WTC11 (cell line): ENCODE measurements at regions of chr6 and their contacts with region 1.

Region 1: DNA sequence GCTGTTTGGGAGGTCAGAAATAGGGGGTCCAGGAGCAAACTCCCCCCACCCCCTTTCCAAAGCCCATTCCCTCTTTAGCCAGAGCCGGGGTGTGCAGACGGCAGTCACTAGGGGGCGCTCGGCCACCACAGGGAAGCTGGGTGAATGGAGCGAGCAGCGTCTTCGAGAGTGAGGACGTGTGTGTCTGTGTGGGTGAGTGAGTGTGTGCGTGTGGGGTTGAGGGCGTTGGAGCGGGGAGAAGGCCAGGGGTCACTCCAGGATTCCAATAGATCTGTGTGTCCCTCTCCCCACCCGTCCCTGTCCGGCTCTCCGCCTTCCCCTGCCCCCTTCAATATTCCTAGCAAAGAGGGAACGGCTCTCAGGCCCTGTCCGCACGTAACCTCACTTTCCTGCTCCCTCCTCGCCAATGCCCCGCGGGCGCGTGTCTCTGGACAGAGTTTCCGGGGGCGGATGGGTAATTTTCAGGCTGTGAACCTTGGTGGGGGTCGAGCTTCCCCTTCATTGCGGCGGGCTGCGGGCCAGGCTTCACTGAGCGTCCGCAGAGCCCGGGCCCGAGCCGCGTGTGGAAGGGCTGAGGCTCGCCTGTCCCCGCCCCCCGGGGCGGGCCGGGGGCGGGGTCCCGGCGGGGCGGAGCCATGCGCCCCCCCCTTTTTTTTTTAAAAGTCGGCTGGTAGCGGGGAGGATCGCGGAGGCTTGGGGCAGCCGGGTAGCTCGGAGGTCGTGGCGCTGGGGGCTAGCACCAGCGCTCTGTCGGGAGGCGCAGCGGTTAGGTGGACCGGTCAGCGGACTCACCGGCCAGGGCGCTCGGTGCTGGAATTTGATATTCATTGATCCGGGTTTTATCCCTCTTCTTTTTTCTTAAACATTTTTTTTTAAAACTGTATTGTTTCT is at the start of gene VEGFA:
- DNase-seq: peak; percentile 94
- ATAC-seq: peak; percentile 49
- H3K4me3 Mint-ChIP-seq: peak within 1 kb of the TSS; percentile 98
- H3K27ac Mint-ChIP-seq: peak within 1 kb of the TSS; percentile 85
- H3K4me1 Mint-ChIP-seq: peaks cover 48% of the 10 kb centered on the region
- H3K27me3 Mint-ChIP-seq: peaks cover 11% of the 10 kb centered on the region
- CTCF ChIP-seq: peak; percentile 94
- total RNA-seq, gene VEGFA: 41.9 to 44.4 TPM (median 43.8 TPM) in 3 replicates

Region 2: DNA sequence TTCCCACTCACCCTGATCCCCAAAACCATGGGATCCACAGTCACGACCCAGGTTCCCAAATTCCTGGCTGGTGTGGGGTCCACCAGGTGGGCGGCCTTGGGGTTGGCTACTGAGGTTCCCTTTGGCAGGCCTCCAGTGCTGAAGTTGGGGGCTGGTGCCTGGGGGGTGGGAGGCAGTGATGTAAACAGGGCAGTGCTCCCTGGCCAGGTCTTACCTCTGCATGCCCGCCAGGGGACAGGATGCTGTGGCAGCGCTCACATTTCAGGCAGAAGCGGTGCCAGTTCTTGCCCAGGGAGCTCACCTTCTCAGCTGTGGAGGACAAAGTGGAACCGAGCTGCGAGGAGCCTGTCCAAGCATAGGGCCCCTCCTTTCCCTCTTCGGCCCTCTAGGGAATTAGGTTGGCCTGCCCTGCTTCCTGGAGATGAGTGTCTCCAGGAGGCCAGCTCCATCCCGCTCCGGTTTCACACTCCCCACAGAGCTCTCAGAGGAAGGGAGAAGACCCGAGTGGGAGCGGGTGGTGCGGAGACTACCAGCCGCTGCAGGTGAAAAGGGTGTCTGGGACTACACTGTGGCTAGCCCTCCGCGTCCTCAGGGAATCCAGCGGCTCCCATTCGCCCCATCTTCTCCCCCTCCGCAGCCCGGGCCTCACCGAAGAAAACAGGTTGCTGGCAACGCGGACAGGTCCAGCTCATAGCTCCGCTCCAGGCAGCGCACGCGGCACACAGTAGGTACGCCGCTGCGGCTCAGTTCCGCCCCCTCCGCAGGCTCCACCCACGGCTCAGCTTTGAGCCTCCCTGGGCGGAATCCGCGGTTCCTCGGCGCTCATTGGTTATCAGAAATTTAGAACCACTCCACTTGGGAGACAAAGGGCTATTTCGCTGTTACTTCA is 461.4 kb before region 1 on chr6 and contains the start of gene CRIP3:
- CTCF ChIA-PET with region 1: no interaction called
- POLR2A ChIA-PET with region 1: no interaction called
- DNase-seq: peak; percentile 90
- ATAC-seq: peak; percentile 98
- H3K4me3 Mint-ChIP-seq: peak within 1 kb of the TSS; percentile 84
- H3K27ac Mint-ChIP-seq: peak within 1 kb of the TSS; percentile 84; the same call in 1 of the 2 replicates
- H3K4me1 Mint-ChIP-seq: peaks cover 27% of the 10 kb centered on the region
- H3K27me3 Mint-ChIP-seq: 0 out of 2 replicates have a peak, but pooled peaks cover 4% of the 10 kb centered on the region
- CTCF ChIP-seq: no peak
- total RNA-seq, gene CRIP3: 44.7 to 48.9 TPM (median 45.6 TPM) in 3 replicates

Region 3: DNA sequence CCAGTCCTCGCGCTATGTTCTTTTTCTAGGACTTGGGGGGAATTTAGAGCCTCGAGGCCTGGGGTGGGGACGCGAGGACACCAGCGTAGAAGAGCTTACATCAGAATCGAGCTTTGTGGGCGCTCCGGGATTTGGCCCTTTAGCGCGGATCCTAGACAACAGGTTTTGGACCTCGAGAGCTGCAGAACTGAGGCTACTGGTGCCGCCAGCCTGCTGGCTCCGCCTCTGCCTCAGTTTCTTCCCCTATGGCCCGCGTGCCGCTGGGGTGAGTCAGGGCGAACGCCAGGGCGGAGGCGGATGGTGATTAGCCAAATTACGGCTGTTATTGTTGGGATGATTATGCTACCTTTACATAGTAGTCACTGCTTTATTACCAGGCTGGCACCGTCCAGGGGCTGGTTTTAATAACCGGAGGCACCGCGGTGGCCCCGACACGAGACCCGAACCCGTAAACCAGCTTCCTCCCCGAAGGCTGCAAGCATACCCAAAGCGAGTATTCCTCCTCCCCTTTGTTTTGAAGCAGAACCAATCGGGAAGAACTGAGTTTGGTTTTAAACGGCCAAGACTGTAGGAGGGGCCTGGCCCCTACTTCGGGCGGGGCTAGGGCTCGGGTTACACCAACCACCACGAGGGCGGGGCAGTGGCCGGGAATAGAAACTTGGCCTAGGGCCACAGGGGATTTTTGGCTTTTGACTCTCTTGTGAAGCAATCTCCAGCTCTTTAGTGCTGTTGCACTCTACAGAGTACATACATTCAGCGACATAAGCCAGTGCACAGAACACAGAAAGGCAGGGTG is 140.1 kb before region 1 on chr6:
- CTCF ChIA-PET with region 1: interaction called, 7 read pairs
- POLR2A ChIA-PET with region 1: interaction called, 10 read pairs
- DNase-seq: peak; percentile 94
- ATAC-seq: peak; percentile 81
- H3K4me3 Mint-ChIP-seq: peak overlapping the region; percentile 98
- H3K27ac Mint-ChIP-seq: peak overlapping the region; percentile 100
- H3K4me1 Mint-ChIP-seq: peaks cover 17% of the 10 kb centered on the region
- H3K27me3 Mint-ChIP-seq: no peaks in the 10 kb centered on the region
- CTCF ChIP-seq: no peak

Region 4: GRCh38 chr6:43667245-43668150 is 102.3 kb before region 1 on chr6:
- CTCF ChIA-PET with region 1: interaction called, 68 read pairs
- POLR2A ChIA-PET with region 1: interaction called, 12 read pairs
- DNase-seq: peak; percentile 88
- ATAC-seq: peak; percentile 63
- H3K4me3 Mint-ChIP-seq: peak overlapping the region; percentile 55
- H3K27ac Mint-ChIP-seq: peak overlapping the region; percentile 7; the same call in 1 of the 2 replicates
- H3K4me1 Mint-ChIP-seq: peaks cover 36% of the 10 kb centered on the region
- H3K27me3 Mint-ChIP-seq: peaks cover 9% of the 10 kb centered on the region
- CTCF ChIP-seq: peak; percentile 81

Region 5: GRCh38 chr6:43723737-43724295 is 46.0 kb before region 1 on chr6:
- CTCF ChIA-PET with region 1: interaction called, 18 read pairs
- POLR2A ChIA-PET with region 1: interaction called, 4 read pairs
- DNase-seq: peak; percentile 80
- ATAC-seq: peak; percentile 93
- H3K4me3 Mint-ChIP-seq: no peak overlapping the region
- H3K27ac Mint-ChIP-seq: no peak overlapping the region
- H3K4me1 Mint-ChIP-seq: peaks cover 12% of the 10 kb centered on the region
- H3K27me3 Mint-ChIP-seq: no peaks in the 10 kb centered on the region; the same call in 1 of the 2 replicates
- CTCF ChIP-seq: peak; percentile 60

Region 6: DNA sequence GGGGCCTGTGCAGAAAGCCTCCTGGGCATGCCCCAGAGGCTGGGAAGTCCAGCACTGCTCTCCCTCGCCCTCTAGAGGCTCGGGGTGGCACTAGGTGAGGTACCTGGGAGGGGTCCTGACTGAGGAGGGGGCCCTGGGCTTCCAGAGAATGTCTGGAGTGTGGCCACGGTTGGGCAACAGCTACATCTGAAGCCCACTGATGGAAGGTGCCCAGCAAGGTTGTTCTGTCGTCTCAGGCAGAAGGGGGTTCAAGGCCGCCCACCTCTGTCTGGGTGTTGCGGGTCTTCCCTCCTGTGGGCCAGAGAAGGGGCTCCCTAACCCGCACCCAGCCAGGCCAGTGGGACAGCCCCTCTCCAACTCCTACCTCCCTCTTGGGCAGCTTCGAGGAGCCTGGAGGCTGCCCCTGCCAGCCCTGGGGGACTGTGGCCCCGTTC is 11.1 kb before region 1 on chr6:
- CTCF ChIA-PET with region 1: interaction called, 67 read pairs
- POLR2A ChIA-PET with region 1: interaction called, 18 read pairs
- DNase-seq: peak; percentile 90
- ATAC-seq: peak; percentile 97
- H3K4me3 Mint-ChIP-seq: no peak overlapping the region
- H3K27ac Mint-ChIP-seq: no peak overlapping the region
- H3K4me1 Mint-ChIP-seq: peaks cover 21% of the 10 kb centered on the region
- H3K27me3 Mint-ChIP-seq: no peaks in the 10 kb centered on the region; the same call in 1 of the 2 replicates
- CTCF ChIP-seq: peak; percentile 63

Region 7: GRCh38 chr6:43817192-43817591 is 47.4 kb after region 1 on chr6:
- CTCF ChIA-PET with region 1: interaction called, 10 read pairs
- POLR2A ChIA-PET with region 1: no interaction called
- DNase-seq: peak; percentile 65
- ATAC-seq: peak; percentile 99
- H3K4me3 Mint-ChIP-seq: no peak overlapping the region
- H3K27ac Mint-ChIP-seq: no peak overlapping the region
- H3K4me1 Mint-ChIP-seq: peaks cover 3% of the 10 kb centered on the region; the same call in 1 of the 2 replicates
- H3K27me3 Mint-ChIP-seq: no peaks in the 10 kb centered on the region; the same call in 1 of the 2 replicates
- CTCF ChIP-seq: no peak

Region 8: GRCh38 chr6:43951063-43951755 is 181.4 kb after region 1 on chr6:
- CTCF ChIA-PET with region 1: interaction called, 77 read pairs
- POLR2A ChIA-PET with region 1: interaction called, 8 read pairs
- DNase-seq: peak; percentile 90
- ATAC-seq: peak; percentile 95
- H3K4me3 Mint-ChIP-seq: no peak overlapping the region
- H3K27ac Mint-ChIP-seq: no peak overlapping the region
- H3K4me1 Mint-ChIP-seq: peaks cover 4% of the 10 kb centered on the region
- H3K27me3 Mint-ChIP-seq: no peaks in the 10 kb centered on the region
- CTCF ChIP-seq: no peak; the same call in none of the 2 replicates